ENCODE measurements at regions of chr7 and their contacts with region 1.

Region 1: GRCh38 chr7:98745722-98746318 is 124.0 kb downstream of the TMEM130 start:
- DNase-seq: no peak
- ATAC-seq: no peak
- H3K4me3 ChIP-seq: no peak overlapping the region
- H3K27ac ChIP-seq: no peak overlapping the region
- H3K4me1 ChIP-seq: no peaks in the 10 kb centered on the region
- H3K27me3 ChIP-seq: peaks cover 0 to 3% (median 0%) of the 10 kb centered on the region in 3 donors
- CTCF ChIP-seq: peak in 4 of 5 experiments; percentile 23 to 57 (median 36)
- POLR2A ChIP-seq: no peak

Region 2: DNA sequence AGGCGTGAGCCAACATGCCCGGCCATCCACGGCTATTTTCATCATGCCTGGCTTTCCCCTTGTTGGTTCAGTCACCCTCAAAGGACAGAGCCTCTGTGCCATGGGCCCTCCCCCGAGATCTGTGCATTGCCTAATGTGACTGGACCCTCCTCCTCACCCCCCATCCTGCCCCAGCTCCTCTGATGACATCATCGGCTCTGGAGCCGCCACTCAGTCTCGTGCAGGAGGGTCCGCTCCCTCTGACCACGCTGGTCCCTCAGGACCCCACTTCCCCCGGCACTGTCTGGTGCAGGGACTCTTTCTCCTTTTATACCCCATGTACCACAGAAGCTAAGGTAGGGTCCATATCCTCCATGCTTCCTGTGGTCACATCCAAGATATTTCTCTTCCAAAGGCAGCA is 311.7 kb before region 1 on chr7:
- in situ Hi-C with region 1: loop called in 1 of 4 experiments (anchors 10 kb)
- intact Hi-C with region 1: no loop called
- DNase-seq: no peak
- ATAC-seq: no peak
- H3K4me3 ChIP-seq: no peak overlapping the region
- H3K27ac ChIP-seq: no peak overlapping the region
- H3K4me1 ChIP-seq: no peaks in the 10 kb centered on the region
- H3K27me3 ChIP-seq: no peaks in the 10 kb centered on the region
- CTCF ChIP-seq: no peak
- POLR2A ChIP-seq: no peak